AG04449 (cell line): ENCODE measurements at regions of chr7 and their contacts with region 1.

Region 1: DNA sequence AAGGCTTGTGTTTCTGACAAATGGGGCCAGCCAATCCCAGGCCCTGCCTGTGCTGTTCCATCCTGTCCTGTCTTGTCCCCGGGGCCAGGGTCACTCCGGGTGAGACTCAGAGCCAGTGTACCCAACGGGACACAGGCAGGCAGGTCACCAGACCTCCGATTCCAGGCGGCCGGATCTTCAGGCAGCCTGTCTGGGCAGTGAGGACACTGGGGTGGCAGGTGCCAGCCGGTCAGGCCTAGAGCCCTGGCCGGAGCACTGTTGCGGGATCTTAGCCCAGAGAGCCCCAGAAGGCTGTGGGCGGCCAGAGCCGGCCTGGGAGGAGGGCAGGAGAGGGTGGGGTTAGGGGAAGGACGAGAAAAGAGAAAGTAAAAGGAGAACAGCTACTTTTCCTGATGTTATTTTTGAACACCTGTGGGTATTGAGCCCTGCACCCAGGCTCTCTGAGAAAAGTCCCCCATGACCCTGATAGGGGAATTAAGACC is 134.3 kb upstream of the TNRC18 start:
- DNase-seq: no peak
- H3K4me3 ChIP-seq: no peak overlapping the region
- CTCF ChIP-seq: no peak

Region 2: GRCh38 chr7:5278766-5279165 is 279.2 kb before region 1 on chr7:
- CTCF ChIA-PET with region 1: no interaction called
- POLR2A ChIA-PET with region 1: no interaction called
- DNase-seq: no peak
- H3K4me3 ChIP-seq: no peak overlapping the region
- CTCF ChIP-seq: no peak

Region 3: GRCh38 chr7:5406957-5407945 is 150.7 kb before region 1 on chr7:
- CTCF ChIA-PET with region 1: no interaction called
- POLR2A ChIA-PET with region 1: no interaction called
- DNase-seq: no peak
- H3K4me3 ChIP-seq: no peak overlapping the region
- CTCF ChIP-seq: no peak

Region 4: DNA sequence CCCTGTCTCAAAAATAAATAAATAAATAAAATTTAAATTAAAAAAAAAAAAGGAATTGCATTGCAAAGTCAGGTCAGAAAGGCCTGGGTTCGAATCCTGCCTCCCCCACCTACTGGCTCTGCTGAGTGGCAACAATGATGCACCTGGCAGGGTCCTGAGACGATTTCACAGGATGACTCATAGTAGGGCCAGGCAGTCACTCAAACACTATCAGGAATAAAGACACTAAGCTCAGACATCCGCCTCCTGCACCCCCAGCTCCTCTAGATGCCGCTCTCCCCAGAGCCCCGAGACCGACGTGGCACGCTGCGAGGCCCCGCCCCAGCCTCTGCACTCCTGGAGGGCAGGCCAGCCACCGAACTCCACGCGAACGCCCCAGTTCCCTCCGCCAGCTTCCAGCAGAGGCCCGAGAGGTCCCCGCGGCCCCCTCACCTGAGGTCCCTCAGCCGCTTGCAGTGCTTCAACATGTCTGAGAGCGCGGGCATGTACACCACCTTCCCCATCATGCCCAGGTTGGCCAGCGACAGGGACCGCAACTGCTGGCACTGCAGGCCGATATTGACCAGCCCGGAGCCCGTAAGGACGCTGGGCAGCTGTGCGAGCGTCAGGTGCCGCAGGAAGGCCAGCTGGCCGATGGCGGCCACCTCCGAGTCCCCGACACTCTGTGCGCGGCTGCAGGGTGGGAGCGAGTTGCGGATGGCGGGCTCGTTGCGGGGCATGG is 57.7 kb before region 1 on chr7:
- CTCF ChIA-PET with region 1: interaction called, 17 read pairs
- POLR2A ChIA-PET with region 1: interaction called, 5 read pairs
- DNase-seq: no peak
- H3K4me3 ChIP-seq: no peak overlapping the region
- CTCF ChIP-seq: no peak

Region 5: GRCh38 chr7:5507013-5507412 is 50.9 kb before region 1 on chr7:
- CTCF ChIA-PET with region 1: interaction called, 17 read pairs
- POLR2A ChIA-PET with region 1: no interaction called
- DNase-seq: no peak
- H3K4me3 ChIP-seq: no peak overlapping the region
- CTCF ChIP-seq: no peak

Region 6: DNA sequence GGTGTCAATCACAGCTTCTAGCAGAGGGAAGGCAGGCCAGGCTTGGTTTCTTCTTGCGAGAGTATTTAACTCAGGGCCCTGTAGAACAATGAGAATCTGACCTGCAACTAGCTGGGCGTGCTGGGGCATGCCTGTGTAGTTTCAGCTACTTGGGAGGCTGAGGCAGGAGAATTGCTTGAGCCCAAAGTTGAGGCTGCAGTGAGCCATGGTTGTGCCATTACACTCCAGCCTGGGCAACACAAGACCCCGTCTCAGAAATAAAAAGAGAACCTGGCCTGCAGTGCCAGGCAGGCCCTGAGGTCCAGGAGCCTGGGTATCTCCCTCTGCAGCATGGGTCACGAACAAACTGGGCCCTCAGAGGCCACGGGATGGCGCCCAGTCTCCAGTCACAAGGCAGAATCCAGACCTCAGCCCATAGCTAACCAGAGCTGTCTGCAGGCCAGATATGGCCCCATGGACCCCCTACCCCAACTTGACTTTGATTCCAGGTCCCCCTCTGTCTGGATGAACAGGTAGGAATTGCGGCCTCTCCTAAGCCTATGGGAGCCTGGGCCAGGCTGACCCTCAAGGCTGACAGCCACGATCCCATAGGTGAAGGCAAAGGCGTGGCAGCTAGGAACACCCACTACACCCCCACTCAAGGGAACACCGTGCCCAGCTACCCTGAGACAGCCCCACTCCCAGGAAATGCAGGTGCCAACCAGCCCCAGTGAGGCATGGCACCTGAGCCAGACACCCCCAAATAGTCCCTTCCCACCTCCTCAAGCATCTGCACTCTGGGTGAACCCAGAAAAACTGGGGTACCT is 31.7 kb before region 1 on chr7:
- CTCF ChIA-PET with region 1: interaction called, 3 read pairs
- POLR2A ChIA-PET with region 1: interaction called, 15 read pairs
- DNase-seq: no peak
- H3K4me3 ChIP-seq: peak overlapping the region; percentile 94
- CTCF ChIP-seq: no peak

Region 7: GRCh38 chr7:5596046-5596895 is 38.3 kb after region 1 on chr7:
- CTCF ChIA-PET with region 1: interaction called, 16 read pairs
- POLR2A ChIA-PET with region 1: interaction called, 3 read pairs
- DNase-seq: peak; percentile 60
- H3K4me3 ChIP-seq: peak overlapping the region; percentile 87
- CTCF ChIP-seq: no peak

Region 8: GRCh38 chr7:5694912-5695726 is 137.2 kb after region 1 on chr7:
- CTCF ChIA-PET with region 1: interaction called, 10 read pairs
- POLR2A ChIA-PET with region 1: interaction called, 3 read pairs
- DNase-seq: peak; percentile 88
- H3K4me3 ChIP-seq: peak overlapping the region; percentile 61
- CTCF ChIP-seq: no peak

Region 9: DNA sequence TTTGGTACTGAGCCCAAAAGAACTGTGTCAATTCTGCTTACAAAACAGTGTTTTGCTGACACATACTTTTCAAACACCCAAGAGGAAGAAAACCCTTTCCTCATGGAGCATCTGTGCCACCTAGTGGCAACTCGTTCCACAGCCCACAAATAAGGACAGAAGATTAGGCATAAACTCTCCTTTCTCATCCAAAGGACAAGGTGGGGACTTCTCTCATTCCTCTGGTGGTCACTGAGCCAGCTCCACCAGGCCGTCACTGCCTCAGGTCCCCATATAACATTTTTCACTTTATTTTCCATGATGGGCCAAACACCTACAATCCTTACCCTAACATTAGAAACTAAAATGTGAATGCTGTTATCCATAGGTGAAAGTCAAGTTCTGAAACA is 146.6 kb after region 1 on chr7:
- CTCF ChIA-PET with region 1: interaction called, 21 read pairs
- POLR2A ChIA-PET with region 1: no interaction called
- DNase-seq: no peak
- H3K4me3 ChIP-seq: no peak overlapping the region
- CTCF ChIP-seq: peak; percentile 78